ENCODE measurements at regions of chr3 and their contacts with region 1.

Region 1: DNA sequence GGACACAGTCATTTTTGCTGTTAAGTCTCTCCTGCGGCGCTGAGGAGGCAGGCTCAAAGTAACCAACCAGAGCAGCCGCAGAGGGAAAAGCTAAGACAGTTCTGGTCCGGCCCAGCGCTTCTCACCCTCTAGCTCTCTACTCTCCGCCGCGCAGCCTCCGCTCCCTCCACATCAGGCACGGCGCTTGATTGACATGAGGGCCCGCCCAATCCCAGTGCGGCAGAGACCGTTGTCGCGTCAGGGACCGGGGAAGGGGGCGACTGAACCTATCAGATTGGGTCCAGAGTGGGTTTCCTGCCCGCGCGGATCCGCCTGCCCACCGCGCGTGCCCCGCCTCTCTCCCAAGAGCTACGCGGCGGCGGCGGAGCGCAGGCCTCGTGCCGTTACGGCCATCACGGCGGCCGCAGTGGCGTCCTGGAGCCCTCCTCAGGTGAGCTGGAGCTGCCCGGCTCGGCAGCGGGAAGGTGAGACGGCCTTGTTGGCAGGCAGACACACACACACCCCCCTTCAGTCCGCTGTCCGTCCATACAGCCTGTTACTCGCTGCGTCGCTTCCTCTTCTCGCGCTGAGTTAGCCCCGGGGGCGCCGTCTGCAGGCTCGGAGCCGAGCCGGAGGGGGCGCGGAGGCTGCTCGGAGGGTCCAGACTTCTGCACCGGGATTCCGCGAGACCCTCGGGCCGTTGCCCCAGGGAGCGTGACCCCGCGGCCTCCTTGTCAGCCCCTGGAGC is at the start of gene NCK1:
- DNase-seq: peak; percentile 97
- ATAC-seq: peak; percentile 96
- H3K4me3 Mint-ChIP-seq: peak within 1 kb of the TSS; percentile 94
- H3K27ac Mint-ChIP-seq: peak within 1 kb of the TSS; percentile 97
- H3K4me1 Mint-ChIP-seq: peaks cover 46% of the 10 kb centered on the region
- H3K27me3 Mint-ChIP-seq: no peaks in the 10 kb centered on the region
- CTCF ChIP-seq: no peak
- total RNA-seq, gene NCK1: 24.4 to 31.6 TPM (median 28.9 TPM) in 3 replicates

Region 2: DNA sequence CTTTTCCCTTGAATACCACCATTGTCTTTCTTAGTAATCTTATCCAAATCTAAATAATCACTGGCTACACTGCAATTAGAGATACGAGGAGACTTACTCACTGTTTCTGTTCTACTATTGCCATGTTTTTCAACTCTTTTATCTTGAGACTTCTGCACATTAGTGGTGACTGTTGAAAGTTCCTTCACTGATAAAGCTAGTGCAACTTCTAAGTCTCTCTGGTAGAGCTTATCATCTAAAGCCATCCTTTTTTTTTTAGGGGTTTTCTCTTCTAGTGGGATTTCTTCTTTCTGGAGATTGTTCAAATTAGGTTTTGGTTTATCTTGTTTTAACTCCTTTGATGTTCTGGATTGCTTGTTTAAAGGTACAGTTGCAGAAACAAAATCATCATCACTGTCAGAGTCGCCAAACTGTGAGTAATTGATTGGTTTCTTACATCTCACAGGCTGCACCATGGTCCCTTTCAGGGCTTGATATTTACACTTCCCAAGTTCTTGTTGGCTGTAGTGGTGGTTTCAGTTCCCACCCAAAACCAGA is 37.6 kb after region 1 on chr3:
- CTCF ChIA-PET with region 1: no interaction called
- POLR2A ChIA-PET with region 1: no interaction called
- DNase-seq: no peak
- ATAC-seq: no peak
- H3K4me3 Mint-ChIP-seq: no peak overlapping the region
- H3K27ac Mint-ChIP-seq: peak overlapping the region; percentile 26; the same call in 1 of the 2 replicates
- H3K4me1 Mint-ChIP-seq: peaks cover 58% of the 10 kb centered on the region
- H3K27me3 Mint-ChIP-seq: no peaks in the 10 kb centered on the region
- CTCF ChIP-seq: no peak

Region 3: DNA sequence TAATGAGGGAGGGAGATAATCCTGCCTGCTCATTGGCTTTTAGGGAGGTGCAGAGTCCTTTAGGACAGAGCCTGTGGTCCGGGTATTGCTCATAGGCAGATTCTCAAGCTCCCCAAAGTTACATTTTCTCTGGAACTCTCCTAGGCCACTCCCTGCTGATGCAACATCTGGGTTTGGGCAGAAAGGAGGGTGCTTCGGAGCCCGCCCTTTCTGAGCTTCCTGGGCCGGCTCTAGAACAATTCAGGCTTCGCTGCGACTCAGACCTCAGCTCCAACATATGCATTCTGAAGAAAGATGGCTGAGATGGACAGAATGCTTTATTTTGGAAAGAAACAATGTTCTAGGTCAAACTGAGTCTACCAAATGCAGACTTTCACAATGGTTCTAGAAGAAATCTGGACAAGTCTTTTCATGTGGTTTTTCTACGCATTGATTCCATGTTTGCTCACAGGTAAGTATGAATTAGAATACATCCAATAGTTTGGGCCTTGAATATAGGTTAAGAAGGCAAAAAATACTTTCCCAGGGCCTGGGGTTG is 95.8 kb after region 1 on chr3 and contains the start of gene IL20RB:
- CTCF ChIA-PET with region 1: no interaction called
- POLR2A ChIA-PET with region 1: interaction called, 16 read pairs
- DNase-seq: peak; percentile 32
- ATAC-seq: peak; percentile 85
- H3K4me3 Mint-ChIP-seq: no peak within 1 kb of the TSS
- H3K27ac Mint-ChIP-seq: 0 out of 2 replicates have a peak within 1 kb of the TSS, but pooled peaks have one; percentile 42
- H3K4me1 Mint-ChIP-seq: peaks cover 31% of the 10 kb centered on the region
- H3K27me3 Mint-ChIP-seq: no peaks in the 10 kb centered on the region
- CTCF ChIP-seq: no peak
- total RNA-seq, gene IL20RB: 2.3 to 3.1 TPM (median 2.4 TPM) in 3 replicates